Gastrocnemius medialis (tissue), 4 donors: ENCODE measurements at regions of chr17 and their contacts with region 1.

Region 1: GRCh38 chr17:74961657-74962490 is 10.7 kb downstream of the HID1 start:
- DNase-seq: peak; percentile 71 to 78
- ATAC-seq: peak; percentile 93 to 96
- H3K4me3 ChIP-seq: no peak overlapping the region
- H3K27ac ChIP-seq: no peak overlapping the region
- H3K4me1 ChIP-seq: no peaks in the 10 kb centered on the region
- H3K27me3 ChIP-seq: no peaks in the 10 kb centered on the region
- CTCF ChIP-seq: peak; percentile 64 to 90 (median 85)
- POLR2A ChIP-seq: no peak

Region 2: GRCh38 chr17:74748529-74749365 is 213.1 kb before region 1 on chr17 and contains the start of gene NHERF1:
- in situ Hi-C with region 1: no loop called
- intact Hi-C with region 1: loop called (anchors 10 kb)
- DNase-seq: peak; percentile 89 to 92
- ATAC-seq: peak; percentile 9 to 85
- H3K4me3 ChIP-seq: peak within 1 kb of the TSS; percentile 74 to 99 (median 80)
- H3K27ac ChIP-seq: peak within 1 kb of the TSS; percentile 74 to 83 (median 77)
- H3K4me1 ChIP-seq: peaks cover 11 to 14% of the 10 kb centered on the region in 2 donors
- H3K27me3 ChIP-seq: peaks cover 0 to 4% (median 0%) of the 10 kb centered on the region in 3 donors
- CTCF ChIP-seq: peak in 1 of 5 experiments; percentile 5
- POLR2A ChIP-seq: peak; percentile 95 to 98
- total RNA-seq, gene NHERF1: 3.8 to 5.6 (median 5.5) TPM

Region 3: DNA sequence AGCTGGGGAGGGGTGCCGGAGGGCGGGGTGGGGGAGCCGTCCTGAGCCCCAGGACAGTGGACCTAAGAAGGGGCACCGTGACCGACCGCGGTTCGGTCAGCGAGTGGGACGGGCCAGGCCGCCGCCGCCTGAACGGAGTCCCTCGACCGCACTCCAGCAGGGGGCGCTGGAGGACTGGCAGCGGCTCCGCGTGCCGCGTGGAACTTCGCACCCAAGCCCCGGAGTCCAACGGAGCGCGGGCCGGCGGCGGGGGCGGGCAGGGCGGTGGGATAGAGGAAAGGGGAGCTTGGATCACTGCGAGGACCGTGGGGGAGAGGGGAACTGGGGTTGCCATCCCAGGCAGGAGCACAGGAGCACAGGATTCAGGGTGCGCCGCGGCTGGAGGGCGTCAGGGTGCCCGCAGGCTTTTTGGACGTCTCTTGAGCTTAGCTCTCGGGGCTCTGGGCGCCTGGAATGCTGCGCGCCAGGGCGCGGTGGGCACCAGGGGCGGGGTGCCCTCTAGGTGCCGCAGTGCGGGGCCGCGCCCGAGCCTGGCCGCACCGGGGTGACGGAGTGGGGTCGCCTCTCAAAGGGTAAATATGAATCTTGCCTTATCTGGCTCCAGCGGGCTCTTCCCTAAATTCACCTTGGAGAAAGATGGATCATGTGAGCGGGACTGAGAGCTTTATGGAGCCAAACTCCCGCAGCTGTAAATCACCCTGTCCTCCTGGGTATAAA is 38.2 kb before region 1 on chr17:
- in situ Hi-C with region 1: no loop called
- intact Hi-C with region 1: loop called (anchors 1 kb)
- DNase-seq: peak; percentile 14 to 24
- ATAC-seq: peak in 1 of 2 donors; percentile 73
- H3K4me3 ChIP-seq: peak overlapping the region; percentile 10 to 54 (median 42)
- H3K27ac ChIP-seq: no peak overlapping the region
- H3K4me1 ChIP-seq: peaks cover 0 to 14% of the 10 kb centered on the region in 2 donors
- H3K27me3 ChIP-seq: peaks cover 49 to 58% (median 56%) of the 10 kb centered on the region in 3 donors
- CTCF ChIP-seq: peak in 4 of 5 experiments; percentile 39 to 78 (median 62)
- POLR2A ChIP-seq: no peak

Region 4: DNA sequence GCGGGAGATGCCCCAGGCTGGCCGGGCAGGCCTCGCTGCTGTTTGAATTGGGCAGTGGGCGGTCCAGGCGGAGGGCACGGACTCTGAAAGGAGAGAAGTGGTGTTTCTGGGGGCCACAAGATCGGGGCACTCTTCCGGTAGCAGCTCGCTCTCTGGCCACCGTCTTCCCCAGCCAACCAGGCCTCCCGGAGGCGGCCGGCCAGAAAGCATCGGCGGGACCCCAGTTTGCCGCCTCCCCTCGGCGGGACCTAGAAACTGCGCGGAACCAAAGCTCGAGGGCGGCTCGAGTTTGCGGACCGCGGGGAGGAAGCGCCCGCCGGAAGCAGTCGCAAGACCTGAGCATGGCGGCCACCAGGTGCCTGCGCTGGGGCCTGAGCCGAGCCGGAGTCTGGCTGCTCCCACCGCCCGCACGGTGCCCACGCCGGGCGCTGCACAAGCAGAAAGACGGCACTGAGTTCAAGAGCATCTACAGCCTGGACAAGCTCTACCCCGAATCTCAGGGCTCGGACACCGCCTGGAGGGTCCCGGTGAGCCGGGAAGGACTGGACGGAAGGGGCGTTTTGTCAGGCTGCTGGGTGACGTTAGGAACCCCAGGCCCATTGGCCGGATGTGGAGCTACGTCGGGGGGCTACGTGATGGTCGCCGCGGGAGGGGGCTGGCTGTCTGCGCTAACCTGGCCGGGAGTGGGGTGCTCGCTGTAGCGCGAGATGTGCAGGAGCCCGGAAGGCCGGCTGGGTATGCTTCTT is 50.6 kb after region 1 on chr17 and contains the start of gene MRPL58:
- in situ Hi-C with region 1: no loop called
- intact Hi-C with region 1: loop called (anchors 1 kb)
- DNase-seq: peak; percentile 60 to 72
- ATAC-seq: peak; percentile 93 to 94
- H3K4me3 ChIP-seq: peak within 1 kb of the TSS; percentile 82 to 98 (median 88)
- H3K27ac ChIP-seq: peak within 1 kb of the TSS; percentile 79 to 87 (median 82)
- H3K4me1 ChIP-seq: peaks cover 16 to 22% of the 10 kb centered on the region in 2 donors
- H3K27me3 ChIP-seq: no peaks in the 10 kb centered on the region
- CTCF ChIP-seq: peak; percentile 45 to 72 (median 60)
- POLR2A ChIP-seq: no peak
- total RNA-seq, gene MRPL58: 97.9 to 141 (median 107) TPM

Region 5: GRCh38 chr17:75205037-75205792 is 243.3 kb after region 1 on chr17 and contains the start of gene NUP85:
- in situ Hi-C with region 1: no loop called
- intact Hi-C with region 1: loop called (anchors 1 kb)
- DNase-seq: peak; percentile 88 to 91
- ATAC-seq: peak; percentile 93 to 95
- H3K4me3 ChIP-seq: peak within 1 kb of the TSS; percentile 81 to 96 (median 88)
- H3K27ac ChIP-seq: peak within 1 kb of the TSS; percentile 87 to 98 (median 95)
- H3K4me1 ChIP-seq: peaks cover 12 to 16% of the 10 kb centered on the region in 2 donors
- H3K27me3 ChIP-seq: no peaks in the 10 kb centered on the region
- CTCF ChIP-seq: peak in 4 of 5 experiments; percentile 2 to 33 (median 16)
- POLR2A ChIP-seq: peak; percentile 69 to 72
- total RNA-seq, gene NUP85: 9.4 to 27.7 (median 13.6) TPM

Region 6: DNA sequence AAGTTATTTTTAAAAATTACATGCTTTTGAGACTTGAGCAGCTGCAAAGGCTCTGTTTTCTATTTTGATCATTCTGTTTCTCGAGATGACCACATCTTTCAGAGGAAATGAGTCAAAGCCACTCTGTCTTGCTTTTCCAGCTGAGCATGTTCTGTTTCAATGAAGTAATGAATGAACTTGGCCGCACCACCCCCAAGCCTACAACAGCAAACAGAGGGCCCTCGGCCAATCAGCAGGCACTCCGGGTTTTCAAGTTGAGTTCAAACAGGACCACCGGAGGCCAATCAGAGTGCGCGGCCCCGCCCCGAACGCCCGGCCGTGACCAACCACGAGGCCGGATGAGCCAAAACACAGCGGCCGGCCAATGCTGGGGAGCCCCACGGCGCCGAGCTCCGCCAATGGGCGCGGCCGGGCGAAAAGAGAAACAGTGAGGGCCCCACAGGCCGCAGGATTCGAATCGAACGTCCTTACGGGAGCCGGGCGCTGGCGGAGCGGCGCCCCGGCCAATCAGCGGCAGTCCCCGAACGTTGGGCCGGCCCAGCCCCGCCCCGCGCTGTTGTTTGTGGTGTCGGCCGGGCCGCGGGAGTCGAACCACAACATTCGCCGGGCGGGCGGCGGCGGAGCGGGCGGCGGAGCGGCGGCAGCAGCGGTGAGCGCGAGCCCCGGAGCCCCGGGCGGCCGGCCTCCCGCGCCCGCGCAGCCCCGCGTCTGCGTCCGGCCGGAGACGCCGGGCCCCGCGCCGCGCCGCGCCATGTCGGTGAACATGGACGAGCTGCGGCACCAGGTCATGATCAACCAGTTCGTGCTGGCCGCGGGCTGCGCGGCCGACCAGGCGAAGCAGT is 1303.1 kb after region 1 on chr17 and contains the start of gene UBALD2:
- in situ Hi-C with region 1: no loop called
- intact Hi-C with region 1: no loop called
- DNase-seq: peak; percentile 99 to 100
- ATAC-seq: peak; percentile 78 to 79
- H3K4me3 ChIP-seq: peak within 1 kb of the TSS; percentile 66 to 89 (median 80)
- H3K27ac ChIP-seq: peak within 1 kb of the TSS; percentile 90 to 98 (median 95)
- H3K4me1 ChIP-seq: peaks cover 52 to 58% of the 10 kb centered on the region in 2 donors
- H3K27me3 ChIP-seq: no peaks in the 10 kb centered on the region
- CTCF ChIP-seq: peak in 1 of 5 experiments; percentile 27
- POLR2A ChIP-seq: peak; percentile 96 to 98
- total RNA-seq, gene UBALD2: 28.9 to 151 (median 52.2) TPM